ENCODE measurements at regions of chr19 and their contacts with region 1.

Region 1: GRCh38 chr19:30649934-30650614 is 277.9 kb downstream of the ZNF536 start:
- DNase-seq: peak in 1 of 2 donors; percentile 48
- ATAC-seq: no peak
- H3K4me3 ChIP-seq: no peak overlapping the region
- H3K4me3 Mint-ChIP-seq: no peak overlapping the region
- H3K27ac ChIP-seq: no peak overlapping the region
- H3K27ac Mint-ChIP-seq: no peak overlapping the region
- H3K4me1 ChIP-seq: no peaks in the 10 kb centered on the region
- H3K4me1 Mint-ChIP-seq: no peaks in the 10 kb centered on the region
- H3K27me3 ChIP-seq: no peaks in the 10 kb centered on the region
- H3K27me3 Mint-ChIP-seq: peaks cover 11 to 41% of the 10 kb centered on the region in 2 donors
- CTCF ChIP-seq: no peak

Region 2: DNA sequence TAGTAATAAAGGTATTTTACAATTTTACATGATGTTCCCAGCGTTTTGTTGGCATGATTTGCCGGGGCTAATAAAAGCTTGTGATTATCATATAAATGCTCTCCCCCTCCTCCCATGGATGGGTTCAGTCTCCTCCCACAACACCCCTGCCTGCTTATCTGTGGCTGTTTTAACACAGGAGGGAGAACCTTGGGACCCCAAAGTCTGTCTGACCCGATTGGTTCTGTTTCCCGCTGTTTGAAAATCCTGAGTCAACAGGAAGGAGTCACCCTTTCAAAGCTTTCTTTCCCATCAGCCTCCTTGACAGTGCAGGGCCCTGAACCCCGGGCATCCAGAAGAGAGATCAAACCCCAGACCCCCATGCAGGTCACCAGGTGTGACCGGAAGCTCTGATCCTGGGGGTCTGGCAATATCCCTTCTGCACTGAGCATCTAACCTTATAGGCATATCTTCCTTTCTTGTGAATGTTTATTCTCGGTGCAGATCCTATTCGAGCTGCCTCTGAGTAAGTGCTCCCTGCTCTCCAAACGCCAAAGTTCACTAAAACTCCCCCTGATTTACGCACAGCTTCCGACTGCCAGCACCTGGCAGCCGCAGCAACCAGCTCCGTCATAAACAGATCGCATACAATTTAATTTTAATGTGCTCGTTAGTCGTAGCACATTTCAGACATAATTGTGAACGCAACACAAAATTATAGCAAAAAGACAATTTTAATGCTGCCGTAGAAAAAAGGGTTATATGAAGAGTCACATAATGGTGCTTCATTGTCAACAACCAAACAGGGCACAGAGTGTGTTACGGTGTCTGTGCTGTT is 624.4 kb after region 1 on chr19:
- intact Hi-C with region 1: loop called (anchors 5 kb)
- DNase-seq: no peak
- ATAC-seq: no peak
- H3K4me3 ChIP-seq: no peak overlapping the region
- H3K4me3 Mint-ChIP-seq: no peak overlapping the region
- H3K27ac ChIP-seq: no peak overlapping the region
- H3K27ac Mint-ChIP-seq: no peak overlapping the region
- H3K4me1 ChIP-seq: no peaks in the 10 kb centered on the region
- H3K4me1 Mint-ChIP-seq: no peaks in the 10 kb centered on the region
- H3K27me3 ChIP-seq: no peaks in the 10 kb centered on the region
- H3K27me3 Mint-ChIP-seq: no peaks in the 10 kb centered on the region
- CTCF ChIP-seq: no peak